Panc1 (cell line): ENCODE measurements at regions of chr12 and their contacts with region 1.

Region 1: DNA sequence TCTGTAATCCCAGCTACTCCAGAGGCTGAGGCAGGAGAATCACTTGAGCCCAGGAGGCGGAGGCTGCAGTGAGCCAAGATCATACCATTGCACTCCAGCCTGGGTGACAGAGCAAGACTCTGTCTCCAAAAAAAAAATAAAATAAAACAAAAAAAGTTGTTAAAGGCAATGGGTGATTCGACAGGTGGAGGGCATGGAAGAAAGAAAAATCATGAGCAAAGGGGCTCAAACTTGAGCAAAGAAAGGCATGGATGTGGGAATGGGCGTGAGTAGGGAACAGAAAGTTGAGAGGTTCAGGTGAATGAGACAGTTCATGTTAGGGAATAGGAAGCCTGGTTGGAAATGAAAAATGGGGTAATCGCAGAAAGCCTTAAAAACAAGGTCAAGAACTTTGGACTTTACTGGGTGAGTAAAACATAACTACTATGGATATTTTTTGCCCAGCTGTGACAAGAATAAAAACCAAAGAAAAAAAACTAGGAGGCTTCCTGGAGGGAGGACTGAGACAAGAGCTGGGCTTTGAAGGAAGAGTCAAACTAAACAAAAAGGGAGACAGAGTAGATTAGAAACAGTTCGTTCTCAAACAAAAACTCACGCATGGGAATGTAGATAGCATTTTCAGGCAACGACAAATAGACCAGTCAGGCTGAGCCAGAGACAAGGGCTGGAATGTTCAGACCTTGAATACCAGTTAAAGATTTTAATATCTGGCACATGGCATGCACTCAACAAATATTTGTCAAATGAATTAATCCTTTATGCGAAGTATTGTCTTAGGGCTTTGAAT is 18.8 kb downstream of the PYM1 start:
- DNase-seq: no peak
- ATAC-seq: no peak
- H3K4me3 ChIP-seq: no peak overlapping the region
- H3K27ac ChIP-seq: no peak overlapping the region; the same call in 1 of the 2 replicates
- H3K4me1 ChIP-seq: peaks cover 9% of the 10 kb centered on the region
- H3K27me3 ChIP-seq: no peaks in the 10 kb centered on the region
- CTCF ChIP-seq: no peak

Region 2: GRCh38 chr12:55746147-55746912 is 162.6 kb before region 1 on chr12:
- CTCF ChIA-PET with region 1: no interaction called
- POLR2A ChIA-PET with region 1: no interaction called
- in situ Hi-C with region 1: no loop called
- intact Hi-C with region 1: no loop called
- DNase-seq: no peak
- ATAC-seq: no peak
- H3K4me3 ChIP-seq: no peak overlapping the region
- H3K27ac ChIP-seq: no peak overlapping the region
- H3K4me1 ChIP-seq: peaks cover 24% of the 10 kb centered on the region
- H3K27me3 ChIP-seq: no peaks in the 10 kb centered on the region
- CTCF ChIP-seq: no peak

Region 3: DNA sequence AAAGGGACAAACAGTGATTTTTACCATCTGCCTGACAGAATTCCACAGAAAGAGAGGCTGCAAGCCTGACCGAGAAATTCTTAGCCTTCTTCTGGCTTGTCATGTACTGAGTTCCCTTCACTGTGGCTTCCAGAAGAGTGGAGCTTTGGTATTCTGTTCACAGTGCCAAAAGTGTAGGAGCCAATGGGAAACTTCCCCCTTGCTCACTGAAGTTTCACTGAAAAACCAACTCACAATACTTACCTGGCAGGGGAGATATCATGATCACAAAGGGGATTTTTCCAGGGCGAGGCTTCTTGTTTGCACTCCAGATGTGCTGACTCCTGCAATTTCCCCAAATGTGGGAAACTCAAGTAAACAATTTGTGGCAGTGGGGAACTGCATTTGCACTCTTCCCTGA is 34.5 kb before region 1 on chr12:
- CTCF ChIA-PET with region 1: no interaction called
- POLR2A ChIA-PET with region 1: no interaction called
- in situ Hi-C with region 1: no loop called
- intact Hi-C with region 1: no loop called
- DNase-seq: no peak
- ATAC-seq: no peak
- H3K4me3 ChIP-seq: no peak overlapping the region
- H3K27ac ChIP-seq: no peak overlapping the region
- H3K4me1 ChIP-seq: no peaks in the 10 kb centered on the region
- H3K27me3 ChIP-seq: no peaks in the 10 kb centered on the region
- CTCF ChIP-seq: no peak

Region 4: GRCh38 chr12:55926738-55927587 is 18.0 kb after region 1 on chr12:
- CTCF ChIA-PET with region 1: interaction called, 11 read pairs
- POLR2A ChIA-PET with region 1: interaction called, 4 read pairs
- in situ Hi-C with region 1: no loop called
- intact Hi-C with region 1: no loop called
- DNase-seq: peak; percentile 84
- ATAC-seq: peak; percentile 89
- H3K4me3 ChIP-seq: peak overlapping the region; percentile 67 to 91
- H3K27ac ChIP-seq: peak overlapping the region; percentile 100
- H3K4me1 ChIP-seq: peaks cover 32% of the 10 kb centered on the region
- H3K27me3 ChIP-seq: no peaks in the 10 kb centered on the region
- CTCF ChIP-seq: peak; percentile 96